ENCODE measurements at regions of chr4 and their contacts with region 1.

Region 1: GRCh38 chr4:26854701-26855100 is 5.9 kb upstream of the STIM2 start:
- DNase-seq: no peak
- H3K4me3 ChIP-seq: no peak overlapping the region
- H3K27ac ChIP-seq: no peak overlapping the region
- H3K4me1 ChIP-seq: peaks cover 0 to 13% of the 10 kb centered on the region in 2 donors
- H3K27me3 ChIP-seq: no peaks in the 10 kb centered on the region
- CTCF ChIP-seq: no peak
- POLR2A ChIP-seq: no peak

Region 2: DNA sequence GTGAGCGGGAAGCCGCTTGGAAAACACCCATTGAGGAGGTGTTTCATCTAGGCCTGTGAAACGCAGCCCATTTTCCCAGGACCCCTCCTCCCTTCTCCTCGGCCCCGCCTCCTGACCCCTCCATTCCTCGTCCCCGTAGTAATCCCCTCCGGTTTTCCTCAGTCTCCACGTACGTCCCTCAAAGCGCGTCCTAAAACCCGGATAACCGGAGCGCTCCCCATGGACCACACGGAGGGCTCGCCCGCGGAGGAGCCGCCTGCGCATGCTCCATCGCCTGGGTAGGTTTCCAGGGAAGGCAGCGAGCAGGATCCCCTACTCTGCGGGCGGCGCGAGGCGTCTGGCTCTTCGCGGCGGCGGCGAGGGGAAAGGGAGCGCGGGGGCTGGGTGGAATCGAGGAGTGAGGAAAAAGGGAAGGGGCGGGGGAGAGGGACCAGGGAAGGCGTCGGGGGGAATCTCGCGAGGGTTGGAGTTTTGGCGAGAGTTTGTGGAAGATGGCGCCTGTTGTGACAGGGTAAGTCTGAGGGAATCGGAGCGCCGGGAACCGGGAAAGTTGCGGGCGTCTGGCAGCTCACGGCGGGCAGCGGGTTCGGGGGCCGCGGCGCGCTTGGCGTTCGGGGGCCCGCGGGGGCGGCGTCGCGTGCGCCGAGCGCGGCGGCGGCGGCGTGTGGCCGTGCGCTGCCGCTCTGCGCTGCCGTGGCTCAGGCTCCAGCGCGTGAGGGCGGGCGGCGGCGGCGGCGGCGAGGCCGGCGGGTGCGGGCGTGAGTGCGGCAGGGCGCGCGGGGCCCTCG is 534.0 kb before region 1 on chr4 and contains the start of gene RBPJ:
- intact Hi-C with region 1: loop called (anchors 5 kb)
- DNase-seq: peak; percentile 82 to 87
- H3K4me3 ChIP-seq: peak within 1 kb of the TSS; percentile 75 to 87 (median 78)
- H3K27ac ChIP-seq: peak within 1 kb of the TSS; percentile 94 to 97
- H3K4me1 ChIP-seq: no peaks in the 10 kb centered on the region
- H3K27me3 ChIP-seq: no peaks in the 10 kb centered on the region
- CTCF ChIP-seq: no peak
- POLR2A ChIP-seq: peak; percentile 51
- total RNA-seq, gene RBPJ: 64.9 to 143 (median 88.7) TPM

Region 3: DNA sequence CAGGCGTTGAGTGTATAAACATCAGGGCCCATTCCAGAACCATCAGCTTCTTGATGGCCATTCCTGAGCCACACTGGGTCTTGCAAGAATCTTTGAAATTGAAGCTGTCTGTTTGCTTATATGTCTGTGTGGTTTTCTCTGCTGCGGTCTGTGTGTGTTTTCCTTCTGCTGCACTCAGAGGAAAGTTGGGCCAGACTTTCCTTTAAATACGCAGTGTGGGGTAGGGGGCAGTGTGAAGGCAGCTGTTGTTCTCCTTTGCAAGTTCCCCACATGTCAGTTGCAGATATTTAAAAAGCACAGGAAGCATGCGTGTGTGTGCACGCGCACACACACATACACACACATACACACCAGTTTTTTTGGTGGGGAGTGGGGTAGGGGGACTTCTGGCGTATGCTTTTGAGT is 396.5 kb before region 1 on chr4:
- intact Hi-C with region 1: no loop called
- DNase-seq: no peak
- H3K4me3 ChIP-seq: no peak overlapping the region
- H3K27ac ChIP-seq: no peak overlapping the region
- H3K4me1 ChIP-seq: no peaks in the 10 kb centered on the region
- H3K27me3 ChIP-seq: no peaks in the 10 kb centered on the region
- CTCF ChIP-seq: no peak
- POLR2A ChIP-seq: no peak